ENCODE measurements at regions of chr3 and their contacts with region 1.

Region 1: DNA sequence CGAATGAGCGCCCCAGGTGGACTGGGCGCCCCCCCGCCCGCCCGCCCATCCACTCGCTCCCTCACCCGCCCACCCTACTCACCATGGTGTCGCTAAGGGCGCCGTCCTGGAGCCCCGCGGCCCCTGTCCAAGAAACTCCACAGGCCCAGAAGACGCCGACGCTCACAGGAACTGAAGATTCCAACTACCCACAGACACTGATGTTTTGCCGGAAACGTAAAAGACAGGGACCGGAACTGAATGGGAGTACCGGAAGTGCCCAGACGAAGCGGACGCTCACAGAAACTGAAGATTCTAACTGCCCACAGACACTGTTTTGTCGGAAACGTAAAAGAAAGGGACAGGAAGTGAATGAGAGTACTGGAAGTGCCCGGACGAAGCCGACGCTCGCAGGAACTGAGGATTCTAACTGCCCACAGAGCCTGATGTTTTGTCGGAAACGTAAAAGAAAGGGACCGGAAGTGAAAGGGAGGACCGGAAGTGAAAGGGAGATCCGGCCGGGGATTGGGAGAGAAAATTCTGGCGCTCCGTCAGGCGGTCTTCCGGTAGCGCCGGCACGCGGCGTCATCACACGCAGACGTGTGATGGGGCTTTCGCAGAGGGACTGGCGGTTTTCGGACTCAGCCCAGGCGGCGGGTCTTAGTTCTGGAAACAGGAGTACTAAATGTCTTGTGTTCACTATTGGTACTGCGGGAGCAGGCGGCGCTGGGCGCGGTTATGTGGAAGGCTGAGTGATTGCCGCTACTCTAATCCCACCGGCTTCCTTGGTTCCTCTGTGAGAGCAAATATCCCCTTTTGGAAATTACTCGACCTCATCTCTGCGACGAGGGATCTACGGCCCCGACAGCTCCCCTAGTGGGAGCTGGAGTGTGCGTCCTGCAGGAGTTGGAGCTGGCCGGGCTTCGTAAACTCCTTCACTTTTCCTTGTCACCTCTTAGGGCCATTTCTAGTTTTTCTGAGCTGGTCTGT is at the start of gene ISY1:
- DNase-seq: peak; percentile 80
- ATAC-seq: peak; percentile 84
- H3K4me3 Mint-ChIP-seq: peak within 1 kb of the TSS; percentile 98
- H3K27ac Mint-ChIP-seq: peak within 1 kb of the TSS; percentile 100
- H3K4me1 Mint-ChIP-seq: peaks cover 39% of the 10 kb centered on the region
- H3K27me3 Mint-ChIP-seq: no peaks in the 10 kb centered on the region
- CTCF ChIP-seq: no peak
- total RNA-seq, gene ISY1: 47.7 and 52.9 TPM in 2 replicates

Region 2: DNA sequence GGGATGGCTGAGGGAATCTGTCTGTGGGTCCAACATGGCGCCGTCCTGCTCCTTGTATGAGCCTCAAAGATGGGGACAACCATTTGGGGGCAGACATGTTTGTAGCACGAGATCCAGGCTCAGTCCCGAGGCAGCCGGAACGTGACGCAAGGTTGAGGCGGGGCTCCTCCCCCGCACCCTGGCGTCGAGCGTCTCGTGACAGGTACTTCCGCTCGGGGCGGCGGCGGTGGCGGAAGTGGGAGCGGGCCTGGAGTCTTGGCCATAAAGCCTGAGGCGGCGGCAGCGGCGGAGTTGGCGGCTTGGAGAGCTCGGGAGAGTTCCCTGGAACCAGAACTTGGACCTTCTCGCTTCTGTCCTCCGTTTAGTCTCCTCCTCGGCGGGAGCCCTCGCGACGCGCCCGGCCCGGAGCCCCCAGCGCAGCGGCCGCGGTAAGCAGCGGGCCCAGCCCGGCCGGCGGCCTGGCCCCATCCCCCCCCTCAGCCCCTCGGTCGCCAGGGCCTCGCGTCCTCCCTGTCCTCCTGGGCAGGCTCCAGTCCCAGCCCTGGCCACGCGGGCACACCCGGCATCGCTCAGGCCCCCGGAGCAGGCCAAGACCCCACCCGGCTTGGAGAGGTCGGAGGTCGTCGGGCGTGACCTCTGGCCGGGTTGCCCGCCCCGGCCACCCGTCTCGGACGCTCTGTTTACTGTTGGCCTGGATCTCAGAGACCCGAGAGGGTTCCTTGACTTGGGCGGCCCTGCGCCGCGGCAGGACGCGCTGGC is 435.1 kb before region 1 on chr3 and contains the start of gene RAB7A:
- CTCF ChIA-PET with region 1: no interaction called
- POLR2A ChIA-PET with region 1: no interaction called
- intact Hi-C with region 1: loop called (anchors 1 kb)
- DNase-seq: peak; percentile 93
- ATAC-seq: peak; percentile 94
- H3K4me3 Mint-ChIP-seq: peak within 1 kb of the TSS; percentile 93
- H3K27ac Mint-ChIP-seq: peak within 1 kb of the TSS; percentile 91
- H3K4me1 Mint-ChIP-seq: peaks cover 61% of the 10 kb centered on the region
- H3K27me3 Mint-ChIP-seq: peaks cover 7% of the 10 kb centered on the region
- CTCF ChIP-seq: no peak
- total RNA-seq, gene RAB7A: 169 and 190 TPM in 2 replicates

Region 3: GRCh38 chr3:129016356-129016719 is 144.8 kb before region 1 on chr3:
- CTCF ChIA-PET with region 1: interaction called, 4 read pairs
- POLR2A ChIA-PET with region 1: interaction called, 8 read pairs
- intact Hi-C with region 1: loop called (anchors 1 kb)
- DNase-seq: peak; percentile 59
- ATAC-seq: peak; percentile 87
- H3K4me3 Mint-ChIP-seq: peak overlapping the region; percentile 55
- H3K27ac Mint-ChIP-seq: peak overlapping the region; percentile 80
- H3K4me1 Mint-ChIP-seq: peaks cover 41% of the 10 kb centered on the region
- H3K27me3 Mint-ChIP-seq: no peaks in the 10 kb centered on the region
- CTCF ChIP-seq: no peak

Region 4: GRCh38 chr3:129052675-129053074 is 108.5 kb before region 1 on chr3:
- CTCF ChIA-PET with region 1: interaction called, 15 read pairs
- POLR2A ChIA-PET with region 1: interaction called, 5 read pairs
- intact Hi-C with region 1: loop called (anchors 1 kb)
- DNase-seq: no peak
- ATAC-seq: no peak
- H3K4me3 Mint-ChIP-seq: no peak overlapping the region
- H3K27ac Mint-ChIP-seq: no peak overlapping the region
- H3K4me1 Mint-ChIP-seq: peaks cover 6% of the 10 kb centered on the region
- H3K27me3 Mint-ChIP-seq: peaks cover 23% of the 10 kb centered on the region
- CTCF ChIP-seq: no peak

Region 5: GRCh38 chr3:129106331-129106730 is 54.8 kb before region 1 on chr3:
- CTCF ChIA-PET with region 1: no interaction called
- POLR2A ChIA-PET with region 1: no interaction called
- intact Hi-C with region 1: no loop called
- DNase-seq: no peak
- ATAC-seq: no peak
- H3K4me3 Mint-ChIP-seq: no peak overlapping the region
- H3K27ac Mint-ChIP-seq: no peak overlapping the region
- H3K4me1 Mint-ChIP-seq: no peaks in the 10 kb centered on the region
- H3K27me3 Mint-ChIP-seq: no peaks in the 10 kb centered on the region
- CTCF ChIP-seq: no peak

Region 6: DNA sequence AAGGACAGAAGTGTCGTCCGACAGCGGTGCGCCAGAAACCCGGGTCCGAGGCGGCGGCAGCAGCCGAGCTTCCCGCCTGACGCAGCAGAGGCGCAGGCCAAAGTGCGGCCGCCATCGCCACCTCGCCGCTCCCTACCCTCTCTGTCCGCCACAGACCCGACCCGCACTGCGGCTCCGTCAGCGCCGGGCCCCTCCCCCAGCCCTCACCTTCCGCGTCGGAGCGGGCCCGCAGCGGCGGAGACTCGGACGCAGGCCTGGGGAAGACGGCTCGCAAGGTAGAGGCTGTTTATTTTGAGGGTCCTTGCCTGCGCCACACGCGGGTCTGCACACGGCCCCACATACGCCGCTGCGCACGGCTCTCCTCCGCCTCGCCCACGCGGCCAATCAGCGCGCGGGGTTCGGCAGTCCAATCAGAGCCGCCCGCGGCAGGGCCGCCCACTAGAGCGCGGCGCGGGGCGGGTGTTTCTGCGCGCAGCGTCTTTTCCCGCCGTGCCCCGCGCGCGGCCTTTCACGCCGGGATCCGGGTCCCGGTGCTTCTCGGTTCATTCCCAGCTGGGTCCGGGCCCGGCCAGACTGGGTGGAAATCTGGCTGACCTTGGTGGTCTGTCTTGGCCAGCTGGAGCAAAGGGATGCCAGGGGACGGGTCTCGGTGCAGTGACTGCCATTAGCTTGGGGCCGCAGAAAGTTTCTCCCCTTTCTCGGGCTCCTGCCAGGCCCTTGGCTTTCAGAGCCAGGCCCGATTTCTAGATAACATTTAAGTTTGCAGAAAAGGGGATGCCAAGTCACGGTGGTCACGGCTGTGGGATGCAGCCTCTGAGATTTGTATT is 22.6 kb after region 1 on chr3 and contains the start of gene CNBP:
- CTCF ChIA-PET with region 1: interaction called, 11 read pairs
- POLR2A ChIA-PET with region 1: interaction called, 40 read pairs
- intact Hi-C with region 1: loop called (anchors 1 kb)
- DNase-seq: peak; percentile 92
- ATAC-seq: peak; percentile 95
- H3K4me3 Mint-ChIP-seq: peak within 1 kb of the TSS; percentile 95
- H3K27ac Mint-ChIP-seq: peak within 1 kb of the TSS; percentile 95
- H3K4me1 Mint-ChIP-seq: peaks cover 50% of the 10 kb centered on the region
- H3K27me3 Mint-ChIP-seq: no peaks in the 10 kb centered on the region
- CTCF ChIP-seq: no peak
- total RNA-seq, gene CNBP: 281 and 303 TPM in 2 replicates

Region 7: GRCh38 chr3:129278439-129278970 is 117.3 kb after region 1 on chr3 and contains the start of gene HMCES:
- CTCF ChIA-PET with region 1: interaction called, 3 read pairs
- POLR2A ChIA-PET with region 1: no interaction called
- intact Hi-C with region 1: loop called (anchors 1 kb)
- DNase-seq: peak; percentile 91
- ATAC-seq: peak; percentile 62
- H3K4me3 Mint-ChIP-seq: peak within 1 kb of the TSS; percentile 91
- H3K27ac Mint-ChIP-seq: peak within 1 kb of the TSS; percentile 86
- H3K4me1 Mint-ChIP-seq: peaks cover 80% of the 10 kb centered on the region
- H3K27me3 Mint-ChIP-seq: no peaks in the 10 kb centered on the region
- CTCF ChIP-seq: no peak
- total RNA-seq, gene HMCES: 31.7 and 37.2 TPM in 2 replicates